ENCODE measurements at regions of chr18 and their contacts with region 1.

Region 1: GRCh38 chr18:67359873-67360838 is 156.4 kb downstream of the DSEL start:
- DNase-seq: peak in 1 of 2 donors; percentile 64
- ATAC-seq: peak; percentile 94
- H3K4me3 ChIP-seq: peak overlapping the region in 1 of 2 donors; percentile 79
- H3K27ac ChIP-seq: peak overlapping the region; percentile 57 to 67
- H3K4me1 ChIP-seq: peaks cover 0 to 3% of the 10 kb centered on the region in 2 donors
- H3K27me3 ChIP-seq: no peaks in the 10 kb centered on the region

Region 2: DNA sequence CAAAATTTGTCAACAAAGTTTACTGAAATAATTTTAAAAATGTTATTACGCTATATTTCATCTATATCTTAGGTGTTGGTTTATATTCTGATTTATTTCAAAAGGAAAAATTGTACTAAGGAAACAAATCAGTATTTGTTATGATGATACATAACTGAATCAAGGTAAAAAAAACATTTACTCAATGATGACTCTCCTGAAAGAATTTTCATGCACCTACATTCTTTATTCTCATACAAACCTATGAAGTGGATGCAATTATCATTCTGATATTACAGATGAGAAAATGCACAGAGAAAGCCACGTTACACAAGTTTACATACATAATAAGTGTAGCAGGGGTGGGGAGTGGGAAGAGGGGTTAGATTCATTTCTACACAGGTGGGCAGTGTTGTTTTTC is 266.0 kb before region 1 on chr18:
- intact Hi-C with region 1: no loop called
- DNase-seq: no peak
- ATAC-seq: no peak
- H3K4me3 ChIP-seq: no peak overlapping the region
- H3K27ac ChIP-seq: no peak overlapping the region
- H3K4me1 ChIP-seq: no peaks in the 10 kb centered on the region
- H3K27me3 ChIP-seq: no peaks in the 10 kb centered on the region

Region 3: GRCh38 chr18:67265464-67266245 is 94.5 kb before region 1 on chr18:
- intact Hi-C with region 1: loop called in 1 of 2 experiments (anchors 5 kb)
- DNase-seq: no peak
- ATAC-seq: peak; percentile 68
- H3K4me3 ChIP-seq: no peak overlapping the region
- H3K27ac ChIP-seq: peak overlapping the region in 1 of 2 donors; percentile 82
- H3K4me1 ChIP-seq: peaks cover 0 to 2% of the 10 kb centered on the region in 2 donors
- H3K27me3 ChIP-seq: no peaks in the 10 kb centered on the region

Measured in aorta (tissue), 5 donors.